ENCODE measurements at regions of chr4 and their contacts with region 1.

Region 1: GRCh38 chr4:37389967-37390580 is 145.5 kb downstream of the NWD2 start:
- DNase-seq: peak in 1 of 2 donors; percentile 19
- ATAC-seq: no peak
- H3K4me3 ChIP-seq: no peak overlapping the region
- H3K27ac ChIP-seq: no peak overlapping the region
- H3K4me1 ChIP-seq: peaks cover 0 to 24% (median 10%) of the 10 kb centered on the region in 9 donors
- H3K27me3 ChIP-seq: peaks cover 0 to 10% (median 0%) of the 10 kb centered on the region in 7 donors
- CTCF ChIP-seq: peak; percentile 41 to 83 (median 76)

Region 2: GRCh38 chr4:36351082-36351666 is 1038.9 kb before region 1 on chr4:
- intact Hi-C with region 1: loop called in 6 of 10 experiments (anchors 5 to 10 kb)
- DNase-seq: peak; percentile 29 to 34
- ATAC-seq: no peak
- H3K4me3 ChIP-seq: no peak overlapping the region
- H3K27ac ChIP-seq: no peak overlapping the region
- H3K4me1 ChIP-seq: peaks cover 0 to 9% (median 0%) of the 10 kb centered on the region in 9 donors
- H3K27me3 ChIP-seq: no peaks in the 10 kb centered on the region
- CTCF ChIP-seq: peak; percentile 30 to 77 (median 63)

Region 3: GRCh38 chr4:36414248-36414647 is 975.8 kb before region 1 on chr4:
- intact Hi-C with region 1: loop called in 2 of 10 experiments (anchors 10 kb)
- DNase-seq: no peak
- ATAC-seq: no peak
- H3K4me3 ChIP-seq: no peak overlapping the region
- H3K27ac ChIP-seq: no peak overlapping the region
- H3K4me1 ChIP-seq: no peaks in the 10 kb centered on the region
- H3K27me3 ChIP-seq: peaks cover 0 to 13% (median 0%) of the 10 kb centered on the region in 7 donors
- CTCF ChIP-seq: peak in 6 of 9 donors; percentile 21 to 43 (median 28)

Region 4: GRCh38 chr4:37219242-37219641 is 170.8 kb before region 1 on chr4:
- intact Hi-C with region 1: no loop called
- DNase-seq: no peak
- ATAC-seq: no peak
- H3K4me3 ChIP-seq: no peak overlapping the region
- H3K27ac ChIP-seq: no peak overlapping the region
- H3K4me1 ChIP-seq: no peaks in the 10 kb centered on the region
- H3K27me3 ChIP-seq: peaks cover 0 to 7% (median 0%) of the 10 kb centered on the region in 7 donors
- CTCF ChIP-seq: no peak

Region 5: DNA sequence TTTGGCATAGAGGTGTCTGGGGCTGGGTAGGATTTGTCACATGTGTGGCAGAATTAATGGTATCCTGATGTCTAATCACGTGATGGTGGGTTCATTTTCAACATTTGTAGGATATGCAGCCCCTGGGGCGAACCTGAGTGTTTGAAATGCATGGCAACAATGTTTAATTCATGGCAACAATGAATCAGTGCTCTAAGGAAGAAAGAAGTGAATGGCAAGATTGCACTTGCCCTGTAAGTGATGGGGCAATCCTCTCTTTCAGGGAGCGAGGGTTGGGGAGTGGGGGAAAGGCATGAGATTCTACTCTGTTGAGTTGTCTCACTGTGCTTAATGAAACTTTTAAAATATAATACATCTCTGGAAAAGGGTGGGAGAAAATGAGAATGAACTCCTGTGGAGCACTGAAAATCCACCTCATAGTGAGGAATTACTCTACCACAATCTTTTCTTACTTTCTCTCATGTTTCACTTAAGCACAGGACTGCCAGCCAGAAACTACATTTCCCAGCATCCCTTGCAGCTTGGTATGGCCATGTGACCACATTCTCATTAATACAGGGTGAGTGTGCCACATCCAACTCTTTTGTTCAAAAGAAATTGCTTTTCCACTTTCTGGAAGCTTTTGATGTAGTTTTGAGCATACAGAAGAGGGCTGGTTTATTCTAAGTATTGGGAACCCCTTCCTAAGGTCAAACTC is 372.4 kb after region 1 on chr4:
- intact Hi-C with region 1: no loop called
- DNase-seq: no peak
- ATAC-seq: no peak
- H3K4me3 ChIP-seq: no peak overlapping the region
- H3K27ac ChIP-seq: no peak overlapping the region
- H3K4me1 ChIP-seq: peaks cover 0 to 53% (median 10%) of the 10 kb centered on the region in 9 donors
- H3K27me3 ChIP-seq: no peaks in the 10 kb centered on the region
- CTCF ChIP-seq: no peak

Measured in heart right ventricle (tissue), 16 donors.